ENCODE measurements at regions of chr2 and their contacts with region 1.

Region 1: DNA sequence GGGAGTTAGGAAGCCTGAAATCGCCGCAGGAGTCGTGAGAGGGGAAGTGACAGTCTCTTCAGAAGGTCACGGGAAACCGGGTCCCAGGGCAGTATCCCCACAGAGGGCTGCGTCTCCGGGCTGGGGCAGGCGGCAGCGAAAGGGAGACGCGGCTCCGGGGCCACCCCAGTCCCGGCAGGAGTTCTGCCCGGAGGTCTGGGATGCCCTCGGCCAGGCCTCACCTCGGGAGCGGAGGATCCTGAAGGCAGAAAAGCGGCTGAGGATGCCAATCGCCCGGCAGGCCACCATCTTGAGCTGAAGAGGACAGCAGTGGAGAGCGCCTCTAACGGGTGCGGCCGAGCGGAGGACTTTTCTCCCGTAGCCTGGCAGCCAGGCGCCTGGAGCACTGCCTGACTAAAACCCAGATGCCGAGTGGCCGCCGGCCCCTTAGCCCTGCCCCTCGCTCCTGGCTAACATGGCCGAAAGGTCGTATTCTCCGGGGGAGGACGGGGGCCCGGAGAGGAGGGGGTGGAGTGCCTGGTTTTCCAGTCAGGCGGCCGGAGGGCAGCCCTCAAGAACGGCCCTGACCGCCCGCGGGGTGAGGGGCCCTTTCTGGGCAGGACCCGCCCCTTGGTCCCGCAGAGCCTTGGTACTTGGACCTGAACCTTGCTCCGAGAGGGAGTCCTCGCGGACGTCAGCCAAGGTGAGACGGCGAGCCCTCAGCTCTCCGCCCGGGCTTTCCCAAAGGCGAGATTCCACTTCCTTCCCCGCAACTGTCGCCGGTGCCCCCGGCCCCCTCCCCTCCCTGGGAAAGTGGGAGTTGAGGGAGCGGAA is at the starts of genes HADHA and HADHB:
- H3K4me3 ChIP-seq: peak within 1 kb of the TSS; percentile 91
- H3K27ac ChIP-seq: peak within 1 kb of the TSS; percentile 97
- H3K4me1 ChIP-seq: peaks cover 2% of the 10 kb centered on the region; the same call in 1 of the 2 replicates
- CTCF ChIP-seq: peak; percentile 86

Region 2: DNA sequence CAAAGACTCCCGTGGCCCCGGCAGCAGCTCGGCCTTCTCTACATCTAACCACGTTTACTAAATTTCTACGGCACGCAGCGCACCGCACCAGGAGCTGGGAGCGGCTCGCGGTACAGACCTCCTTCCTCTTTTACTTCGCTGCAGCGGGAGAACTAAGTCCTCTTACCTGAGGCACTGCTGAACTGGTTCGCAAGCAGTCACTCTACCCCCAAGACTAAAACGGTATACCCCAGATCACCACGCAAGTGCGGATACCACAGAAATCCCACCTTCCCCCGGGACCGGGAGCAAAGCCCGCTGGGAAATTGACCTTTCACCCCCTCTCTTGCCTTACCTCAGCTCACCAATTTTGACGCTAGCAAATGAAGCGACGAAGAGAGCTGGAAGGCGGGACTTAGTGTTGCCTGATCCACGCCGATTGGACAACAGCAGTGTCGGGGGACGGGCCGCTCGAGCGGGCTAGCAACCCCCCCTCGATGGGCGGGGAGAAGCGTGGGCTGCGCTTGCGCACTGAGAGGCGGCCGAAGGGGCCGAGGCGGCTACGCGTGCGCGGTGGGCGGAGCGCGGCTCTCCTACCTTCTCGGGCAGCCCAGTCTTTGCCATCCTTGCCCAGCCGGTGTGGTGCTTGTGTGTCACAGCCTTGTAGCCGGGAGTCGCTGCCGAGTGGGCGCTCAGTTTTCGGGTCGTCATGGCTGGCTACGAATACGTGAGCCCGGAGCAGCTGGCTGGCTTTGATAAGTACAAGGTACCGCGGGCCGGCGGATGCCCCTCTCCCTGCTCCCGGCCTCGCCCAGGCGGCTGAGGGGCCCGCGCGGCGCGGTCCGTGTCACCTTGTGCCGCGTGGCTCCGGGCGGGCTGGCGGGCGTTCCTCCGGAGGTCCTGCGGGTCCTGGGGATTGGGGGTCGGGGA is 101.3 kb after region 1 on chr2 and contains the start of gene SELENOI:
- CTCF ChIA-PET with region 1: interaction called, 4 read pairs
- POLR2A ChIA-PET with region 1: interaction called, 20 read pairs
- H3K4me3 ChIP-seq: peak within 1 kb of the TSS; percentile 92
- H3K27ac ChIP-seq: peak within 1 kb of the TSS; percentile 75
- H3K4me1 ChIP-seq: no peaks in the 10 kb centered on the region; the same call in 1 of the 2 replicates
- CTCF ChIP-seq: peak; percentile 62

Measured in HEK293 (cell line).